ENCODE measurements at regions of chr2 and their contacts with region 1.

Region 1: GRCh38 chr2:234550511-234551107 is 53.7 kb upstream of the ARL4C start:
- DNase-seq: peak; percentile 40
- ATAC-seq: peak; percentile 74
- H3K4me3 Mint-ChIP-seq: no peak overlapping the region
- H3K27ac Mint-ChIP-seq: no peak overlapping the region
- H3K4me1 Mint-ChIP-seq: peaks cover 13% of the 10 kb centered on the region
- H3K27me3 Mint-ChIP-seq: peaks cover 28% of the 10 kb centered on the region
- CTCF ChIP-seq: peak; percentile 67

Region 2: GRCh38 chr2:234603619-234604018 is 53.0 kb after region 1 on chr2:
- CTCF ChIA-PET with region 1: interaction called, 6 read pairs
- POLR2A ChIA-PET with region 1: no interaction called
- intact Hi-C with region 1: loop called (anchors 2 kb)
- DNase-seq: no peak
- ATAC-seq: no peak
- H3K4me3 Mint-ChIP-seq: no peak overlapping the region
- H3K27ac Mint-ChIP-seq: no peak overlapping the region
- H3K4me1 Mint-ChIP-seq: no peaks in the 10 kb centered on the region
- H3K27me3 Mint-ChIP-seq: peaks cover 3% of the 10 kb centered on the region
- CTCF ChIP-seq: no peak

Region 3: GRCh38 chr2:234951664-234952269 is 401.2 kb after region 1 on chr2 and contains the start of gene SH3BP4:
- CTCF ChIA-PET with region 1: no interaction called
- POLR2A ChIA-PET with region 1: no interaction called
- intact Hi-C with region 1: loop called (anchors 5 kb)
- DNase-seq: peak; percentile 60
- ATAC-seq: peak; percentile 91
- H3K4me3 Mint-ChIP-seq: peak within 1 kb of the TSS; percentile 84
- H3K27ac Mint-ChIP-seq: peak within 1 kb of the TSS; percentile 30
- H3K4me1 Mint-ChIP-seq: peaks cover 15% of the 10 kb centered on the region
- H3K27me3 Mint-ChIP-seq: peaks cover 54% of the 10 kb centered on the region
- CTCF ChIP-seq: no peak
- total RNA-seq, gene SH3BP4: 0.76 and 1.1 TPM in 2 replicates

Region 4: DNA sequence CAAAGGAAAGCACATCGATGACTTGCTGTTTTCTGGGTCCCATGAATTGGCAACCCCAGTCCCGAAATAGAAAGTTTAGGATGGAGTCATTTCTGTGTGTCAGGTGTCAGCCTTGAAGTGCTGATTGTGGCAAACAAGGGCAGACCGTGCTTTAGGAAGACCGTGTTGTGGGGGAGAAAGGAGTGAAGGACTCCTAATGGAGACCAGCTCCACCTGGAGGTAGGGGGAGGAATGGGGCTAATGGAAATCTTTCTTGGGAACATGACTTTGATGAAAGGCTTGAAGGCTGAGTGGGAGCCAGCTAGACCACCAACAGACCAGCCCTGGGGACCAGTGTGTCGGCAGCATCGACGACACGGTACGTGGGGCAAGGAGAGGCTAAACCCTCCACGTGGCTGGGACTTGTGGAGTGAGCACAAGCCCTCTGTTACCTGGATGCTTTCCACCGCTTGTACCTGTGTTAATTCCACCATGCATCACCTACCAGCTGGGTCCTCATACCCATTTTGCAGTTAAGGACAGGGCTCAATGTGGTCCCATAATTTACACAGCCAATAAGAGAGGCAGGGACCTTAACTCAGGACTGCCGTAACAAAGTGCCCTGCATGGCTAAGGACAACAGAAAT is 505.4 kb after region 1 on chr2:
- CTCF ChIA-PET with region 1: interaction called, 3 read pairs
- POLR2A ChIA-PET with region 1: no interaction called
- intact Hi-C with region 1: loop called (anchors 1 kb)
- DNase-seq: no peak
- ATAC-seq: no peak
- H3K4me3 Mint-ChIP-seq: no peak overlapping the region
- H3K27ac Mint-ChIP-seq: no peak overlapping the region
- H3K4me1 Mint-ChIP-seq: peaks cover 2% of the 10 kb centered on the region
- H3K27me3 Mint-ChIP-seq: peaks cover 6% of the 10 kb centered on the region
- CTCF ChIP-seq: no peak

Region 5: DNA sequence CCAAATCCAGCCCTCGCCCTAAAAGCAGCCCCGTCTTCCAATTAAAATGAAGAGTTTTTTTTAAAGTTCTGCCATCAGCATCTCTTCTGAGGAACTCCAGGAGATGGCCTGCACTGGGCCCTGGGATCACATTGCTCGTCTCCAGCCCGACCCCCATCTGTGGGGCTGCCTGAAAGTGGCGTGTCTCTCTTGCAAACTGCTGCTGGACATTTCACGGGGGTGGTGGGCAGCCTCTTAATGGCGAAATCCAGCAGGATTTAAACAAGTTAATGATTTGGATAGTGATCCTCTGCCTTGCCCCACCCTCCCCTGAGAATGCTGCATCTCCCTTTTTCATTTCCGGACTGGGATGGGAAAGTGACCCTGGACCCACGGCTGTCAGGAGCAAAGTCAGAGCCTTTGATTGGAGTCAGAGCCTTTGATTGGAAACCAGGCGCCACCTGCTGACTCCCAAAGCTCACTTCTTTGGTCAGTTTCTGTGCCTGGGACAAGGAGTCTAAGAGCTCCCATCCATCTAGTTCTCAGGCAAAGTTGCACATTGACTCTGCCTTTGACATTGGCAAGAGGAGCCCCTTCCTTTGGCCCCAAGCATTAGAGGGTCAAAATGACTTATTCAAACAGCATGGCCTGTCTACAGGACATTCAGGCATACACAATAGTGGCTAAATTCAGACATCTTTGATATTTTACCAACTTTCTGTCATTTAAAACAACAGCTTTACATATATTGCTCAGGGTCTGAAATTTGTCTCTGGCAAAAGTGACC is 556.4 kb after region 1 on chr2:
- CTCF ChIA-PET with region 1: interaction called, 10 read pairs
- POLR2A ChIA-PET with region 1: no interaction called
- intact Hi-C with region 1: loop called (anchors 1 kb)
- DNase-seq: no peak
- ATAC-seq: no peak
- H3K4me3 Mint-ChIP-seq: no peak overlapping the region
- H3K27ac Mint-ChIP-seq: no peak overlapping the region
- H3K4me1 Mint-ChIP-seq: no peaks in the 10 kb centered on the region
- H3K27me3 Mint-ChIP-seq: peaks cover 2% of the 10 kb centered on the region
- CTCF ChIP-seq: no peak

Region 6: GRCh38 chr2:235116885-235117492 is 566.4 kb after region 1 on chr2:
- CTCF ChIA-PET with region 1: interaction called, 69 read pairs
- POLR2A ChIA-PET with region 1: no interaction called
- intact Hi-C with region 1: loop called (anchors 1 kb)
- DNase-seq: no peak
- ATAC-seq: no peak
- H3K4me3 Mint-ChIP-seq: no peak overlapping the region
- H3K27ac Mint-ChIP-seq: no peak overlapping the region
- H3K4me1 Mint-ChIP-seq: no peaks in the 10 kb centered on the region
- H3K27me3 Mint-ChIP-seq: peaks cover 13% of the 10 kb centered on the region
- CTCF ChIP-seq: no peak